ENCODE measurements at regions of chr20 and their contacts with region 1.

Region 1: GRCh38 chr20:41095110-41095969 is 42.0 kb upstream of the PLCG1 start:
- DNase-seq: peak; percentile 68 to 71 (median 70)
- ATAC-seq: peak; percentile 91
- H3K4me3 ChIP-seq: no peak overlapping the region
- H3K27ac ChIP-seq: no peak overlapping the region
- H3K4me1 ChIP-seq: no peaks in the 10 kb centered on the region
- H3K27me3 ChIP-seq: no peaks in the 10 kb centered on the region
- CTCF ChIP-seq: peak; percentile 84 to 91 (median 84)
- EP300 ChIP-seq: no peak
- POLR2A ChIP-seq: no peak
- RAD21 ChIP-seq: peak; percentile 88 to 90

Region 2: DNA sequence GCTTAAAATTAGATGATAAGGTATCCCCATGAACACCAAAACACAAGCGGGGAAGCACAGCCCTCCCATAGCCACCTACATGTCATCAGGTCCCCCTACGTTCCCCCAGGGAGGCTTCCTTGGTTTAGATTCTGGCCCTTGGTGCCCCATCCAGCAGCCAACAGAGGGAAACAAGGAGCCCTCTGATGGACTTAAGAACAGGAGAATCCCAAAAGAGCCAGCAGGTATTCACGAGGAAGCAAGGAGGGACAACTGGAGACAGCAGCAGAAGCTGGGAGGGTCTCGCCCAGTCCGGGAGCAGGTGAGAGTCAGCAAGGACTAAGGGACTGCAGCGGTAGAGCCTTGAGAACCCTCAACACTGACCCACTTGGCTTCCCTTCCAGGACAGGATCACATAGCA is 125.1 kb before region 1 on chr20:
- CTCF ChIA-PET with region 1: interaction called, 36 read pairs
- POLR2A ChIA-PET with region 1: no interaction called
- in situ Hi-C with region 1: no loop called
- intact Hi-C with region 1: loop called (anchors 1 kb)
- DNase-seq: no peak
- ATAC-seq: no peak
- H3K4me3 ChIP-seq: no peak overlapping the region
- H3K27ac ChIP-seq: no peak overlapping the region
- H3K4me1 ChIP-seq: peaks cover 0 to 4% of the 10 kb centered on the region in 2 experiments; a peak in 1 of 5 replicates
- H3K27me3 ChIP-seq: no peaks in the 10 kb centered on the region; a peak in 2 of 5 replicates
- CTCF ChIP-seq: peak in 1 of 3 experiments; percentile 15; a peak in 1 of 6 replicates
- EP300 ChIP-seq: no peak
- POLR2A ChIP-seq: no peak
- RAD21 ChIP-seq: peak in 1 of 2 experiments; percentile 41; a peak in 1 of 4 replicates

Region 3: DNA sequence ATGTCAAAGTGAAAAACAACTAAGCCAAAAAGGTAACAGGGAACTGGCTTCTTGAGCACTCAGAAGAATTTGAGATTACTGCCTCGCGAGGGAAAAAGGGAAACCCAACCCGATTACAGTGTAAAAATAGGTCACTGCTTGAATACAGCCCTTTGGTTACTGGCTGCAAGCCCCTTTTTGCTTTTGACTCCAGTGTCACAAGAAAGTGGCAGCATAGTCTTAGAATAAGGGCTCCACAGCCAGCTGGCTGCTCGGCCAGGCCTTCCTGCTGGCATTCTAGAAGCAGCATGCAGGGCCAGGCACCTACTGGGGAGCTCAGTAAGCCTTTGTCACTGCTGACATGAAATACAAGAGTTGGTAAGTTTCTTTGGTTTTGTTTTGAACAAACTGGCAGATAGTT is 139.2 kb after region 1 on chr20:
- CTCF ChIA-PET with region 1: no interaction called
- POLR2A ChIA-PET with region 1: no interaction called
- in situ Hi-C with region 1: no loop called
- intact Hi-C with region 1: no loop called
- DNase-seq: no peak
- ATAC-seq: no peak
- H3K4me3 ChIP-seq: no peak overlapping the region
- H3K27ac ChIP-seq: no peak overlapping the region
- H3K4me1 ChIP-seq: peaks cover 3 to 4% of the 10 kb centered on the region in 2 experiments; a peak in 4 of 5 replicates
- H3K27me3 ChIP-seq: no peaks in the 10 kb centered on the region
- CTCF ChIP-seq: no peak
- EP300 ChIP-seq: no peak
- POLR2A ChIP-seq: no peak
- RAD21 ChIP-seq: no peak

Region 4: GRCh38 chr20:41476013-41476752 is 380.8 kb after region 1 on chr20:
- CTCF ChIA-PET with region 1: no interaction called
- POLR2A ChIA-PET with region 1: no interaction called
- in situ Hi-C with region 1: no loop called
- intact Hi-C with region 1: no loop called
- DNase-seq: no peak
- ATAC-seq: no peak
- H3K4me3 ChIP-seq: no peak overlapping the region
- H3K27ac ChIP-seq: no peak overlapping the region
- H3K4me1 ChIP-seq: no peaks in the 10 kb centered on the region; a peak in 1 of 5 replicates
- H3K27me3 ChIP-seq: no peaks in the 10 kb centered on the region
- CTCF ChIP-seq: no peak
- EP300 ChIP-seq: no peak
- POLR2A ChIP-seq: no peak
- RAD21 ChIP-seq: no peak

Measured in K562 (cell line).